Caco-2 (cell line): ENCODE measurements at regions of chr11 and their contacts with region 1.

Region 1: DNA sequence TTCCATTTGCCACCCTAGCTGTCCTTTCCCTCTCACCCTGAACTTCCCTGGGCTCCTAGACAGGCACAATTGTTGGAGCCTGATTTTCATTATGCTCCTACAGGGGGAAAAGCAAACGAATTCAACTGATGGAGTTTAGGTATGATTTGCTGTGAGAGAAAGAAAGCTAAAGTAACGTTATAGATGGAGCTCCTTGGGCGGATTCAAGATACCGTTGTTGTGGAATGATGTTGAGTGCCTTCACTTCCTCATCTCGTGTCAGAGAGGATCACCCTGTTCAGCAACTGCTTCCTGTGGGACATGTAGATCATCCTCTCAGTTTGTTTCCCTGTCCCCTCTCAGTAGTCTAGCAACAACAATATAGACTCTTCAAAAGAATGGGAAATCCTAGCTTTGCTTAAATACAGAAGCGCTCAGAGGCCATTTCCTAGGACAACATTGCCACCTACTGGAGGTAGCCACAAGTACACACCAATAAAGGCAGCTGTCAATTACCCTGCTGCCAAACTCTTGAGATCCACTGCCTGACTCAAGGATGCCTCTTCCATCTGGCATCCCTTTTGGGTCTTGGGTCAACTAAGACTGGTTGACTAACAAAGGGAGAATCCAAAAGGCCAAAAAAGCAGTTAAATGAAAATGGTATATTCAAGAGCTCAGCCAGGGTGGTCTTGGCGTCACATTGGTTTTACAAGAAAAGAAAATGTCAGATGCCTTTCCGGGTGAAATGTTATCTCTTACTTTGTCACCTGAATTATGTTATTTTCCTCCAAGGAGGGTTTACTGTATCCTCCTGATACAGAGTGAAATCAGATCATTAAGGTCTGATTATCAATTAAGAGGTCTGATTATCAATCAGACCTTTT is 13.5 kb upstream of the DTX4 start:
- DNase-seq: peak; percentile 68 to 78
- H3K4me3 ChIP-seq: no peak overlapping the region
- H3K4me3 Mint-ChIP-seq: no peak overlapping the region
- H3K27ac Mint-ChIP-seq: no peak overlapping the region
- H3K4me1 ChIP-seq: peaks cover 16% of the 10 kb centered on the region
- H3K4me1 Mint-ChIP-seq: peaks cover 16% of the 10 kb centered on the region
- H3K27me3 ChIP-seq: no peaks in the 10 kb centered on the region
- H3K27me3 Mint-ChIP-seq: peaks cover 10% of the 10 kb centered on the region
- CTCF ChIP-seq: peak; percentile 80 to 84

Region 2: GRCh38 chr11:58654079-58654907 is 504.1 kb before region 1 on chr11:
- CTCF ChIA-PET with region 1: no interaction called
- POLR2A ChIA-PET with region 1: no interaction called
- intact Hi-C with region 1: loop called (anchors 1 kb)
- DNase-seq: peak; percentile 75 to 82
- H3K4me3 ChIP-seq: no peak overlapping the region
- H3K4me3 Mint-ChIP-seq: no peak overlapping the region
- H3K27ac Mint-ChIP-seq: no peak overlapping the region
- H3K4me1 ChIP-seq: peaks cover 13% of the 10 kb centered on the region; the same call in 1 of the 2 replicates
- H3K4me1 Mint-ChIP-seq: peaks cover 23% of the 10 kb centered on the region
- H3K27me3 ChIP-seq: no peaks in the 10 kb centered on the region
- H3K27me3 Mint-ChIP-seq: no peaks in the 10 kb centered on the region
- CTCF ChIP-seq: peak; percentile 88 to 97

Region 3: DNA sequence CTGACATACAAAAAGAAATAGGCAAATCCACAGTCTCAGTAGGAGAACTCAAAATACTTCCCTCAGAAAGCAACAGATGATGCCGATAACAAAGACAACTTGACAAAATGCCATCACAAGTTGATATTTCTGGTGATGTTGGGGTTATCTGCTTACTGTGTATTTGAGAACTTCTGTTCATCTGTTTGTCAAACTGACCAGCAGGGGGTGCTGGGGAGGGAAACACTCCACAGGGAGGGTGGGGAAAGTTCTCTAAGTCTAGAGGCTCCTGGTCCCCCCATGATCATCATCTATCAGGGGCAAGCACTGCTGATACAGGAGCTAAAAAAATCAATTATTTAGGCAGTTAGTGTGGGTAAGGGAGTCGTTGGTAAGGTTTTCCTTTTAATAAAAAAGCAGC is 199.9 kb before region 1 on chr11:
- CTCF ChIA-PET with region 1: no interaction called
- POLR2A ChIA-PET with region 1: no interaction called
- intact Hi-C with region 1: loop called (anchors 1 kb)
- DNase-seq: peak in 1 of 2 experiments; percentile 48
- H3K4me3 ChIP-seq: no peak overlapping the region
- H3K4me3 Mint-ChIP-seq: no peak overlapping the region
- H3K27ac Mint-ChIP-seq: no peak overlapping the region
- H3K4me1 ChIP-seq: no peaks in the 10 kb centered on the region
- H3K4me1 Mint-ChIP-seq: no peaks in the 10 kb centered on the region
- H3K27me3 ChIP-seq: no peaks in the 10 kb centered on the region
- H3K27me3 Mint-ChIP-seq: peaks cover 3% of the 10 kb centered on the region
- CTCF ChIP-seq: peak; percentile 17 to 36

Region 4: DNA sequence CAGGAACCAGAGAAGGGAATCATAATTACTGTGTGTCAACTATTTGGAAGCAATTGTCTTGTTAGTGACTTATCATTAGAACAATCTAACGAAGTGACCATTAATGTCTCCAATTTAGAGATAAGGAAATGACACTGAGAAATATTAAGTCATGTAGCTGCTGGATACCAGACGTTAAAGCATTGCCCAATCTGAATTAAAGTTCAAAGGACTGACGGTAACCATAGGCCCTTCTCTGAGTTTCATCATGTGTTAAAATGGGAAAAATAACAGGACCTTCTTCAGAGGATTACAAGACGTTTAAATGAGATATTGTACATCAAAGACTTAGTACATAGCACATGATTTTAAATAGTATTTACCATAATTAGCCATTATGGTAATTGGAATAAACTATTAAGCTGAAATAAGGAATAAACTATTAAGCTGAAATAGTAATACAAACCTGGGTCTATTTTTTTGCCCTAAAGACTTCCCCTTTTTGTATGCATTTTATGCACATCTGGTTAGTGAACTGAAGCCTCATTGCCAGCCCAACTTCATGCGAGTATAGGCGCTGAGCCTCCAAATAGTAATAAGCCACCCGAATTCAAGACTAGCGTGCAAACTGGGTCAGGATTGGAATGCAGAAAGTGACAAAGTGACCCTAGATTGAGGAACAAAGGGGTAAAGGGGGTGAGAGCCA is 178.1 kb before region 1 on chr11:
- CTCF ChIA-PET with region 1: no interaction called
- POLR2A ChIA-PET with region 1: no interaction called
- intact Hi-C with region 1: no loop called
- DNase-seq: no peak
- H3K4me3 ChIP-seq: no peak overlapping the region
- H3K4me3 Mint-ChIP-seq: no peak overlapping the region
- H3K27ac Mint-ChIP-seq: no peak overlapping the region
- H3K4me1 ChIP-seq: peaks cover 4% of the 10 kb centered on the region
- H3K4me1 Mint-ChIP-seq: peaks cover 9% of the 10 kb centered on the region
- H3K27me3 ChIP-seq: no peaks in the 10 kb centered on the region
- H3K27me3 Mint-ChIP-seq: no peaks in the 10 kb centered on the region
- CTCF ChIP-seq: no peak

Region 5: GRCh38 chr11:59097113-59097708 is 61.2 kb before region 1 on chr11:
- CTCF ChIA-PET with region 1: interaction called, 7 read pairs
- POLR2A ChIA-PET with region 1: interaction called, 3 read pairs
- intact Hi-C with region 1: loop called (anchors 1 kb)
- DNase-seq: peak; percentile 64 to 79
- H3K4me3 ChIP-seq: no peak overlapping the region
- H3K4me3 Mint-ChIP-seq: no peak overlapping the region
- H3K27ac Mint-ChIP-seq: no peak overlapping the region
- H3K4me1 ChIP-seq: no peaks in the 10 kb centered on the region
- H3K4me1 Mint-ChIP-seq: no peaks in the 10 kb centered on the region
- H3K27me3 ChIP-seq: no peaks in the 10 kb centered on the region
- H3K27me3 Mint-ChIP-seq: peaks cover 10% of the 10 kb centered on the region
- CTCF ChIP-seq: peak; percentile 79 to 82

Region 6: GRCh38 chr11:59106363-59107336 is 51.8 kb before region 1 on chr11 and contains the start of gene FAM111B:
- CTCF ChIA-PET with region 1: interaction called, 28 read pairs
- POLR2A ChIA-PET with region 1: interaction called, 8 read pairs
- intact Hi-C with region 1: loop called (anchors 1 kb)
- DNase-seq: peak; percentile 94 to 97
- H3K4me3 ChIP-seq: peak within 1 kb of the TSS; percentile 46
- H3K4me3 Mint-ChIP-seq: peak within 1 kb of the TSS; percentile 99
- H3K27ac Mint-ChIP-seq: peak within 1 kb of the TSS; percentile 97
- H3K4me1 ChIP-seq: peaks cover 21% of the 10 kb centered on the region
- H3K4me1 Mint-ChIP-seq: peaks cover 52% of the 10 kb centered on the region
- H3K27me3 ChIP-seq: no peaks in the 10 kb centered on the region
- H3K27me3 Mint-ChIP-seq: no peaks in the 10 kb centered on the region
- CTCF ChIP-seq: peak in 1 of 2 experiments; percentile 35
- total RNA-seq, gene FAM111B: 49.3 and 55.8 TPM in 2 replicates

Region 7: GRCh38 chr11:59142530-59143507 is 15.6 kb before region 1 on chr11 and contains the start of gene FAM111A:
- CTCF ChIA-PET with region 1: interaction called, 35 read pairs
- POLR2A ChIA-PET with region 1: interaction called, 15 read pairs
- intact Hi-C with region 1: loop called (anchors 1 kb)
- DNase-seq: peak; percentile 92 to 95
- H3K4me3 ChIP-seq: peak within 1 kb of the TSS; percentile 55
- H3K4me3 Mint-ChIP-seq: peak within 1 kb of the TSS; percentile 98
- H3K27ac Mint-ChIP-seq: peak within 1 kb of the TSS; percentile 94
- H3K4me1 ChIP-seq: peaks cover 21% of the 10 kb centered on the region
- H3K4me1 Mint-ChIP-seq: peaks cover 45% of the 10 kb centered on the region
- H3K27me3 ChIP-seq: no peaks in the 10 kb centered on the region
- H3K27me3 Mint-ChIP-seq: no peaks in the 10 kb centered on the region
- CTCF ChIP-seq: peak in 1 of 2 experiments; percentile 75
- total RNA-seq, gene FAM111A: 76.1 and 78.8 TPM in 2 replicates

Region 8: DNA sequence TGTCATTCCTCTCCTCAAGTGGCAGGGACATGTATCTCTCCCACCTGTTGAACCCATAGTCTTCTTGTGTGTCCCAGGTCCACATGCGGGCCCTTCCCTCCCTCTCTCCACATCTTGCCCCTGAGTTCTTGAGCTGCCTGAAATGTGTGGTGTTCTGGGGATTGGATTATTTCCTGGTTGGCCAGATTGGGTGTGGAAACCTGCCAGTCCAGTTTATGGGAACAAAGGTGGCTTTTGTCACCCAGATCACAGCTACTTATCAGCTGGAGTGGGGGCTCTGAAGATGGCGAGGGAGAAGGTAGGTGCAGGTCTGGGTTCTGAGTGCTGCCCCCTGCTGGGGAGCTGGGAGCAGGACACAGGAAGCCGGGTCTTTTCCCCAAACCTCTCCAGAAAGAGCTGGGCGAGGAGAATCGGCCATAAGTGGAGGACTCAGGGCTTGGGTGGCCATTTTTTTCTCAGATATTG is 27.7 kb after region 1 on chr11:
- CTCF ChIA-PET with region 1: interaction called, 14 read pairs
- POLR2A ChIA-PET with region 1: no interaction called
- intact Hi-C with region 1: no loop called
- DNase-seq: peak; percentile 95 to 96
- H3K4me3 ChIP-seq: peak overlapping the region; percentile 13
- H3K4me3 Mint-ChIP-seq: peak overlapping the region; percentile 76
- H3K27ac Mint-ChIP-seq: peak overlapping the region; percentile 93
- H3K4me1 ChIP-seq: peaks cover 81% of the 10 kb centered on the region
- H3K4me1 Mint-ChIP-seq: peaks cover 52% of the 10 kb centered on the region
- H3K27me3 ChIP-seq: no peaks in the 10 kb centered on the region
- H3K27me3 Mint-ChIP-seq: no peaks in the 10 kb centered on the region
- CTCF ChIP-seq: peak; percentile 94 to 95